ENCODE measurements at regions of chr3 and their contacts with region 1.

Region 1: DNA sequence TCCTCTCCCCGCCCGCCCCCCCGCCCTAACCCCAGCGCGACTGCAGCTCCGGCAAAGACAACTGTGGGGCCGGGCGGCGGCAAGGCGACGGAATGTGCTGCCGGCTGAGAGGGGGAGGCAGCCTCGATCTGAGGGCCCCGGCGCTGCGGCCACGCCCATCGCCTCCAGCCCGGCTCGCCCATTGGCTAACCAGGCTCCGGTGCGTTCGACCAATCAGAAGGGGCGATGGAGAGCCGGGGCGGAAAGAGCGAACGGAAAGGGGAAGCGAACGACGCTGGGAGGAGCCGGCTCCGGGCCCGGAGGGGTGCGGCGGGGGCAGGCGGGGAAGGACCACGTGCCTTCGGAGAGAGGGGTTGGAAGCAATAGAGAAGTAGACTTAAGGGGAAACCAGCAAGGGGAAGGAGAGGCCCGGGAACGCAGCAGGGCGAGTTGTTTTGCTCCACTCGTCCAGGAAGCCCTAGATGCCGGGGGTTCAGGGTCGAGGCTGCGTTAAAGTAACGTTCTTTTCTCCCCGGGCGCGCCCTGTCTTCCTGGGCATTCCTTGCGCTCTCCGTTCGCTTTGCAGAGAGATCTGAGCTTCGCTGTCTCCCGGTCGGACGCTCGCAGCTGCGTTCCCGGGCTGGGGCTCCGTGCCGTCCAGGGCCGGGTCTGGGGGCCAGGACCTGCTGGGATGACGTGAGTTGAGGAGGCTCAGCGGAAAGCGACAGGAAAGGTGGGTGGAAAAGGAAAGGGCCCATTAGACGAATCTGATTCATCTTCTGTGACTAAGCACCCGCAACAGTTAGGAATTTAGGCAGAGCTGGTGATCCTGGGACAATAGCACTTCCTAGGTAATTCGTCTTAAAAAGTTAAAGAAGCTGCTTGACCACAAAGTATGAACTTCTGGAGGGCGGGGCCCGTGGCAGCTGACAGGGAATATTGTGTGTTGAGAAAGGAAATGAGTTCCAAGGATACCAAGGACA is at the start of gene KPNA4:
- DNase-seq: peak; percentile 97
- H3K4me3 Mint-ChIP-seq: peak within 1 kb of the TSS; percentile 93
- H3K27ac Mint-ChIP-seq: peak within 1 kb of the TSS; percentile 97
- H3K4me1 Mint-ChIP-seq: peaks cover 45% of the 10 kb centered on the region
- H3K27me3 Mint-ChIP-seq: no peaks in the 10 kb centered on the region
- total RNA-seq, gene KPNA4: 44.9 to 48.4 TPM

Region 2: DNA sequence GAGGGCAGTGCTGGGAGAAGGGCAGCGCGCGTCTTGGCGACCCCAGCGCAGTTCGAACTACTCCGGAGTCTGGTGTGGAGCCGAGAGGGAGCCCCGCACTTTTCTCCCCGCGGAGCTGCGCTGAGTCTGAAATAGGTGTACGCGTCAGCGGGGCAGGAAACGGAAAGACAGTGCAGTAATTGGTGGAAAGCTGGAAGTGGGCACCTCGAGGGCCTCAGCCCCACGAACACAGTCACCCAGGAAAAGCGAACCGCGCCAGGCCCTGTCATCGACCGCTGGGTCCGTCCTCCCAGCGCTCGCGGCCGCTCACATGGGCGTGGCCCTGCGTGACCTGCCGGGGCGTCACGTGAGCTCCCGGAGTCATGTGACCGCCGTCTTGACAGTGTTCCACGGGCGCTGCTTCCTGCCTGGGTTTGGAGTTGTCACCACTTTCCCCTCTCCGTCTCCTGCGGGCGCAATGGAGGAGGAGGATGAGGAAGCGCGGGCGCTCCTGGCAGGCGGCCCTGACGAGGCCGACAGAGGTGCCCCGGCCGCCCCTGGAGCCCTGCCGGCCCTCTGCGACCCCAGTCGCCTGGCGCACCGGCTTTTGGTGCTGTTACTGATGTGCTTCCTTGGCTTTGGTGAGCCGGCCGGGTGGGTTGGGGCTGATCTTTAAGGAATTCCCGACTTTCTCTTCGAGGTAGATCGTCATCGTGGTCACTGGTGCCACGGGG is 1763.9 kb before region 1 on chr3 and contains the start of gene MFSD1:
- CTCF ChIA-PET with region 1: no interaction called
- POLR2A ChIA-PET with region 1: no interaction called
- intact Hi-C with region 1: loop called (anchors 10 kb)
- DNase-seq: peak; percentile 95
- H3K4me3 Mint-ChIP-seq: peak within 1 kb of the TSS; percentile 86
- H3K27ac Mint-ChIP-seq: peak within 1 kb of the TSS; percentile 87
- H3K4me1 Mint-ChIP-seq: peaks cover 23% of the 10 kb centered on the region
- H3K27me3 Mint-ChIP-seq: no peaks in the 10 kb centered on the region
- total RNA-seq, gene MFSD1: 11.9 to 12.4 TPM

Region 3: GRCh38 chr3:160554980-160555379 is 10.7 kb before region 1 on chr3:
- CTCF ChIA-PET with region 1: interaction called, 3 read pairs
- POLR2A ChIA-PET with region 1: no interaction called
- intact Hi-C with region 1: loop called (anchors 1 kb)
- DNase-seq: no peak
- H3K4me3 Mint-ChIP-seq: no peak overlapping the region
- H3K27ac Mint-ChIP-seq: no peak overlapping the region
- H3K4me1 Mint-ChIP-seq: peaks cover 57% of the 10 kb centered on the region
- H3K27me3 Mint-ChIP-seq: no peaks in the 10 kb centered on the region

Region 4: GRCh38 chr3:160754855-160755747 is 189.4 kb after region 1 on chr3:
- CTCF ChIA-PET with region 1: no interaction called
- POLR2A ChIA-PET with region 1: interaction called, 4 read pairs
- intact Hi-C with region 1: loop called (anchors 1 kb)
- DNase-seq: peak; percentile 94
- H3K4me3 Mint-ChIP-seq: peak overlapping the region; percentile 95
- H3K27ac Mint-ChIP-seq: peak overlapping the region; percentile 90
- H3K4me1 Mint-ChIP-seq: peaks cover 26% of the 10 kb centered on the region
- H3K27me3 Mint-ChIP-seq: peaks cover 12% of the 10 kb centered on the region